HepG2 (cell line): ENCODE measurements at regions of chr6 and their contacts with region 1.

Region 1: GRCh38 chr6:157274471-157275226 is 48.7 kb downstream of the TMEM242 start:
- DNase-seq: peak; percentile 38
- ATAC-seq: peak; percentile 92
- H3K4me3 ChIP-seq: peak overlapping the region; percentile 66 to 80 (median 68)
- H3K27ac ChIP-seq: no peak overlapping the region
- H3K4me1 ChIP-seq: peaks cover 52% of the 10 kb centered on the region
- H3K27me3 ChIP-seq: peaks cover 2 to 7% of the 10 kb centered on the region in 2 experiments; a peak in 3 of 5 replicates
- CTCF ChIP-seq: peak; percentile 73; the same call in 1 of the 2 replicates
- EP300 ChIP-seq: no peak
- POLR2A ChIP-seq: no peak
- RAD21 ChIP-seq: peak; percentile 96

Region 2: DNA sequence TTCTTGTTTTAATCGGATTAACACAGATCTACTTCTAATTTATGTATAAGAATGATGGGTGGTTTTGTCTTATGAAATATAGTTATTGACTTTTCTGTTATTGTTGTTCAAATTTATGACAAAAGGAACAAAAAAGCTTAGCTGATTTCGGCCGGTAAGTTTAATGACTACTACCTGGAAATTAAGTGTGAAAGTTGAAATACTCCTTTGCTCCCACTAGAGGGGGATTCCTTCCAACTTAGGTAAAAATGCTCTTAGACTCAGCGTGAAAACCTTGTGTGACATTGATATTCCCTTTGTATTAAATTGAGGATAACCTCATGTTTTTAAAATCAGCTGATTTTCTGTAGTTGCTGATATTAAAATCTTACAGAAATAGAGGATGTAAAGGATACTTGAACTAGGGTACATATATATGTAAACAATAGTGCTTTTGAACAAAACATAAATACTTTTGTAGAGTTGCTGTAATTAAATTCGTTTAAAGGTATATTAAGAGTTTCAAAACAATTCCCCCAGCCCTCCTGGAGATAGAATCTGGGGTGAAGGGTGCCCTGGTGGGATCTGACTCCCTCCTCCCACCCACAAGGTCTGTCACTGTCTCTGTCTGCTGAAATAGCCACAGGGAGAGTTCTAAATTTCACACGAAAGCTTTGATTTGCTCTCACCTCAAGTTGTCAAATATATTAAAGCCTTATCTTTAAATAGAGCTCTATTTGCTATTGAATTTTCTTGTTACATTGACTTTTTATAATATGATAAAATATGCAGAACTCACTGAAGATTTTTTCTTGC is 240.0 kb before region 1 on chr6:
- CTCF ChIA-PET with region 1: no interaction called
- POLR2A ChIA-PET with region 1: no interaction called
- in situ Hi-C with region 1: no loop called
- intact Hi-C with region 1: loop called (anchors 5 kb)
- DNase-seq: peak; percentile 54
- ATAC-seq: peak; percentile 87
- H3K4me3 ChIP-seq: no peak overlapping the region
- H3K27ac ChIP-seq: no peak overlapping the region
- H3K4me1 ChIP-seq: peaks cover 14% of the 10 kb centered on the region
- H3K27me3 ChIP-seq: no peaks in the 10 kb centered on the region
- CTCF ChIP-seq: peak; percentile 73
- EP300 ChIP-seq: no peak
- POLR2A ChIP-seq: no peak
- RAD21 ChIP-seq: peak; percentile 62

Region 3: GRCh38 chr6:157221007-157221816 is 53.4 kb before region 1 on chr6:
- CTCF ChIA-PET with region 1: no interaction called
- POLR2A ChIA-PET with region 1: no interaction called
- in situ Hi-C with region 1: loop called (anchors 5 kb)
- intact Hi-C with region 1: loop called (anchors 2 kb)
- DNase-seq: peak; percentile 69
- ATAC-seq: peak; percentile 72
- H3K4me3 ChIP-seq: peak overlapping the region; percentile 22 to 53 (median 29); a peak in 4 of 6 replicates
- H3K27ac ChIP-seq: no peak overlapping the region
- H3K4me1 ChIP-seq: peaks cover 23% of the 10 kb centered on the region
- H3K27me3 ChIP-seq: peaks cover 13 to 60% of the 10 kb centered on the region in 2 experiments
- CTCF ChIP-seq: peak; percentile 59
- EP300 ChIP-seq: no peak
- POLR2A ChIP-seq: no peak
- RAD21 ChIP-seq: no peak

Region 4: GRCh38 chr6:157227202-157228166 is 47.2 kb before region 1 on chr6:
- CTCF ChIA-PET with region 1: no interaction called
- POLR2A ChIA-PET with region 1: no interaction called
- in situ Hi-C with region 1: loop called (anchors 5 kb)
- intact Hi-C with region 1: loop called (anchors 2 kb)
- DNase-seq: no peak
- ATAC-seq: peak; percentile 63
- H3K4me3 ChIP-seq: no peak overlapping the region
- H3K27ac ChIP-seq: no peak overlapping the region
- H3K4me1 ChIP-seq: no peaks in the 10 kb centered on the region
- H3K27me3 ChIP-seq: peaks cover 18 to 74% of the 10 kb centered on the region in 2 experiments
- CTCF ChIP-seq: peak; percentile 41; the same call in 1 of the 2 replicates
- EP300 ChIP-seq: no peak
- POLR2A ChIP-seq: no peak
- RAD21 ChIP-seq: no peak

Region 5: GRCh38 chr6:157235600-157236039 is 39.0 kb before region 1 on chr6:
- CTCF ChIA-PET with region 1: interaction called, 4 read pairs
- POLR2A ChIA-PET with region 1: no interaction called
- in situ Hi-C with region 1: no loop called
- intact Hi-C with region 1: loop called (anchors 2 kb)
- DNase-seq: peak; percentile 45
- ATAC-seq: peak; percentile 90
- H3K4me3 ChIP-seq: peak overlapping the region; percentile 29 to 71 (median 38)
- H3K27ac ChIP-seq: no peak overlapping the region
- H3K4me1 ChIP-seq: peaks cover 26% of the 10 kb centered on the region
- H3K27me3 ChIP-seq: peaks cover 16 to 91% of the 10 kb centered on the region in 2 experiments; a peak in 4 of 5 replicates
- CTCF ChIP-seq: peak; percentile 81
- EP300 ChIP-seq: no peak
- POLR2A ChIP-seq: no peak
- RAD21 ChIP-seq: 0 out of 2 replicates have a peak, but pooled peaks have one; percentile 41

Region 6: GRCh38 chr6:157298216-157298724 is 23.6 kb after region 1 on chr6:
- CTCF ChIA-PET with region 1: no interaction called
- POLR2A ChIA-PET with region 1: no interaction called
- in situ Hi-C with region 1: no loop called
- intact Hi-C with region 1: no loop called
- DNase-seq: no peak
- ATAC-seq: no peak
- H3K4me3 ChIP-seq: no peak overlapping the region
- H3K27ac ChIP-seq: no peak overlapping the region
- H3K4me1 ChIP-seq: peaks cover 7% of the 10 kb centered on the region
- H3K27me3 ChIP-seq: no peaks in the 10 kb centered on the region
- CTCF ChIP-seq: no peak
- EP300 ChIP-seq: no peak
- POLR2A ChIP-seq: no peak
- RAD21 ChIP-seq: no peak